ENCODE measurements at regions of chrX and their contacts with region 1.

Region 1: DNA sequence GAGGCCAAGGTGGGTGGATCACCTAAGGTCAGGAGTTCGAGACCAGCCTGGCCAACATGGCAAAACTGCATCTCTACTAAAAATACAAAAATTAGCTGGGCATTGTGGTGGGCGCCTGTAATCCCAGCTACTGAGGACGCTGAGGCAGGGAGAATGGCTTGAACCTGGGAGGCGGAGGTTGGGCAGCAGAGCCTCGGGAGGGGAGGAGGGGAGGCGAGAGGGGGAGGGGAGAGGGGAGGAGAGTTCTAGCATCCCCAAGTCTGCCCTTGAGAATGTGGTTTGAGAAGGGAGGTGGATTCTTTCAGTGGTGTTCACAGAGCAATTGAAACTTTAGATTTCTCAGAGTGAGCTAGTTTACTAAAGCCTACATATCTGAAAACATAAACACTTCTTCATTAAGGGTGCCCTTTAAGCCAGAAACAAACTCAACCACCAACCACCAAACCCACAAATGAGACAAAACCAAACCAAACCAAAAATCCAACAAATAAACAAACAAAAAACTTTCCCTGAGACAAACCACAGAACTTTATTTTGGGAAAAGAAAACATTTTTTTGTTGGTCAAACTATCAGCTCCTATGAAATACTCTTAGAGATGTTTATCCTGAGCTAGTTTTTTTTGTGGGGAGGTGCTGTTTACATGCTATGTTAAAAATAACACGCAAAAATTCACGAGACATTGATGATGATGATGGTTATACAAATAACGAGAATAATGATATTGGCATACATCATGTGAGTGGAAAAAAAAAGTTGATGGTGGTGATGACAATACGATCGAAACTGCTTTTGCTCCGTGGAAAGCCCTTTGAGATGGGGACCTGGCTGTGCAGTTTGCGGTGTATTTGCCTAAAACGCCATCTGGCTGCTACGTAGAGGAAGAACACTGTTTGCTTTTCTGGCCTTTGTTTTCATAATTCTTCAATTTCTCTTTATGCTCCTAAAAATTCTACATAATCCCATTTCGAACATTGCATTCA is 98.2 kb upstream of the PRKX start:
- DNase-seq: peak; percentile 16
- ATAC-seq: no peak
- H3K4me3 ChIP-seq: no peak overlapping the region
- H3K27ac ChIP-seq: no peak overlapping the region
- H3K4me1 ChIP-seq: peaks cover 2% of the 10 kb centered on the region; the same call in 1 of the 2 replicates
- H3K27me3 ChIP-seq: 0 out of 5 replicates have a peak, but pooled peaks cover 0 to 3% of the 10 kb centered on the region in 2 experiments
- CTCF ChIP-seq: peak; percentile 62
- EP300 ChIP-seq: no peak
- POLR2A ChIP-seq: no peak
- RAD21 ChIP-seq: no peak

Region 2: DNA sequence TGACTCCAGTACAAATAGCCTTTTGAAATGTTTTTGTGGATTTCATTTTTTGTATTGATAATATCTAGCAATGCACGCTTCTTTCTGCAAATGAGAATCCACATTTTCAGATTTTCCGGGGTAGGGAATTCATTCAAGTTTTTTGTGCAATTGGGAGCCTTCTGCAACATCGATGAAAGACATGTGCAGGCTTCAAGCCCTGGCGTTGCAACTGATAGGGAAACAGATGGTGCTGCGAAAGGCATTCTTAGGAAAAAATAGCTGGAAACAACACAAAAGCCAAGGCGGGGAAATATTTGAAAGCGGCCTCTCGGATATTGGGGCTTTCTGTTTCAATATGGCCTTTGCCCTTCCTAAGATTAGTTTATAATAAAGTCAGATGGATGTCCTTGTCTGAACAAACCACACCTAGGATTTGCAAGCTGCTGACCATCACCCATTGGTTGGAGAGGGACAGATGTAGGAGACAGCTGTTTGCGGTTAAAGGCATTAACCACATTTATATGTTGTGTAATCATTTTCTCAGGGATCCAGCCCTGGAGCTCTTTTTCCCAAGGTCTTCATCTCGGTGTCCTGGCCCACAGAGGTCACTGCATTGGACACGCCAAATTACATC is 234.6 kb before region 1 on chrX:
- CTCF ChIA-PET with region 1: no interaction called
- POLR2A ChIA-PET with region 1: no interaction called
- in situ Hi-C with region 1: no loop called
- intact Hi-C with region 1: no loop called
- DNase-seq: no peak
- ATAC-seq: no peak
- H3K4me3 ChIP-seq: no peak overlapping the region
- H3K27ac ChIP-seq: no peak overlapping the region
- H3K4me1 ChIP-seq: no peaks in the 10 kb centered on the region
- H3K27me3 ChIP-seq: no peaks in the 10 kb centered on the region
- CTCF ChIP-seq: no peak
- EP300 ChIP-seq: no peak
- POLR2A ChIP-seq: no peak
- RAD21 ChIP-seq: no peak

Region 3: DNA sequence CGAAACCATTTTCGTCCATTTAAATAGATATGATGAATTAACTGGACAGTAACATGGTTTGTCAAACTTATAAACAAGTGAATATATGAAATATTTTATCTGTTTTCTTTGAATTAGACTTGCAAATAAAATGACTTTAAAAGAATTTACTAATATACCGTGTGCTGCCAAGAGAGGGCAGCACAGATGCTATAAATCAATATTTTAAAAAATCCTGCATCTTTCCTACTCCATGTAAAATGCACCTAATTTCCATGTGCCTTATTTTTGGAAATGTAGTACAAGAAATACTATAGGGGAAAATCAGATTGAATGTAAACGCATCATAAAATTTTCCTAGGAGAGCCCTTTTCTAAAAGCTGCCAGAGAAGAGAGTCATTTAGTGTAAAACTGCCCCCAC is 160.3 kb before region 1 on chrX:
- CTCF ChIA-PET with region 1: interaction called, 7 read pairs
- POLR2A ChIA-PET with region 1: no interaction called
- in situ Hi-C with region 1: loop called (anchors 25 kb)
- intact Hi-C with region 1: no loop called
- DNase-seq: no peak
- ATAC-seq: no peak
- H3K4me3 ChIP-seq: no peak overlapping the region
- H3K27ac ChIP-seq: no peak overlapping the region
- H3K4me1 ChIP-seq: no peaks in the 10 kb centered on the region
- H3K27me3 ChIP-seq: no peaks in the 10 kb centered on the region
- CTCF ChIP-seq: 0 out of 2 replicates have a peak, but pooled peaks have one; percentile 7
- EP300 ChIP-seq: no peak
- POLR2A ChIP-seq: no peak
- RAD21 ChIP-seq: no peak

Region 4: DNA sequence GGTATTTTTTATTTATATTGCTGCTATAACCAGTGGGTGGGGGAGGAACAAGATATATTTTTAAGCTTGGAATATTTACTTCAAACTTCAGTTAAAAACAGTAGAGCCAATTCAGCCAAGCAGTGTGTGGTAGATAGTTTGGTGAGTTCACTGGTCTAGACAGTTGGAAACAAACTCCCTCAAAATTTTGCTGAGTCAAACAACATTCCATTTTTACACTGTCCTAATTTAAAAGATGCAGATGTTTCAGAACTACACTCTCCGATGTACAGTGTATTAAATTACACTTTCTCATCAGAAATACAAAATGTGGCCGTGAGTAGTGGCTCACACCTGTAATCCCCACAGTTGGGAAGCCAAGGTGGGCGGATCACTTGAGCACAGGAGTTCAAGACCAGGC is 121.5 kb before region 1 on chrX:
- CTCF ChIA-PET with region 1: no interaction called
- POLR2A ChIA-PET with region 1: no interaction called
- in situ Hi-C with region 1: no loop called
- intact Hi-C with region 1: no loop called
- DNase-seq: no peak
- ATAC-seq: no peak
- H3K4me3 ChIP-seq: no peak overlapping the region
- H3K27ac ChIP-seq: no peak overlapping the region
- H3K4me1 ChIP-seq: no peaks in the 10 kb centered on the region
- H3K27me3 ChIP-seq: no peaks in the 10 kb centered on the region
- CTCF ChIP-seq: no peak
- EP300 ChIP-seq: no peak
- POLR2A ChIP-seq: no peak
- RAD21 ChIP-seq: no peak

Region 5: GRCh38 chrX:3940000-3940610 is 128.5 kb after region 1 on chrX:
- CTCF ChIA-PET with region 1: no interaction called
- POLR2A ChIA-PET with region 1: no interaction called
- in situ Hi-C with region 1: loop called (anchors 25 kb)
- intact Hi-C with region 1: no loop called
- DNase-seq: no peak
- ATAC-seq: no peak
- H3K4me3 ChIP-seq: no peak overlapping the region
- H3K27ac ChIP-seq: no peak overlapping the region
- H3K4me1 ChIP-seq: no peaks in the 10 kb centered on the region
- H3K27me3 ChIP-seq: no peaks in the 10 kb centered on the region
- CTCF ChIP-seq: peak; percentile 34; the same call in 1 of the 2 replicates
- EP300 ChIP-seq: no peak
- POLR2A ChIP-seq: no peak
- RAD21 ChIP-seq: no peak